Thyroid gland (tissue), 4 donors: ENCODE measurements at regions of chr2 and their contacts with region 1.

Region 1: GRCh38 chr2:120174963-120175581 is 48.1 kb downstream of the TMEM185B start:
- DNase-seq: no peak
- H3K4me3 ChIP-seq: no peak overlapping the region
- H3K27ac ChIP-seq: peak overlapping the region in 2 of 3 donors; percentile 4 to 38
- H3K4me1 ChIP-seq: peaks cover 0 to 5% of the 10 kb centered on the region in 2 donors
- H3K27me3 ChIP-seq: no peaks in the 10 kb centered on the region
- CTCF ChIP-seq: peak in 5 of 6 experiments; percentile 54 to 80 (median 74)
- POLR2A ChIP-seq: no peak

Region 2: DNA sequence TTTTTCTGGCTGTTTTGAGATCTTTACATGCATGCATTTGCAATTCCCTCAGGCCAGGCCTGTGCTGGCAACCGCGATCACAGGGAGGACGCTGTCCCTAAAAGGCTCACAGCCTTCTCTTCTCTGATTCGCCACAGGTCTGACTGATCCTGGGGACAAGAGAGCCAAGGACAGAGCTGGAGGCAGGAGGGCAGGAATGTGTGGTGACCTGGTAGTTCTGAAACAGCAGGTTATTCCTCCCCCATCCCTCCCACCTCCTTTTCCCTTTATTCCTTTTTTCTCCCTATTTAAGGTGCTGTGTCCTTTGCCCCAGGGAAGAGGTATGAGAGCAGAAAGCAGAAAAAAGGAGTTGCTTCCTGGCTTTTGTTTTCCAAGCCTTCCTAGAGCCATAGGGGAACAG is 474.2 kb before region 1 on chr2:
- intact Hi-C with region 1: loop called (anchors 2 kb)
- DNase-seq: no peak
- H3K4me3 ChIP-seq: no peak overlapping the region
- H3K27ac ChIP-seq: peak overlapping the region in 2 of 3 donors; percentile 72 to 79
- H3K4me1 ChIP-seq: peaks cover 34 to 57% of the 10 kb centered on the region in 2 donors
- H3K27me3 ChIP-seq: no peaks in the 10 kb centered on the region
- CTCF ChIP-seq: no peak
- POLR2A ChIP-seq: no peak

Region 3: GRCh38 chr2:119753041-119753929 is 421.8 kb before region 1 on chr2:
- intact Hi-C with region 1: loop called (anchors 5 kb)
- DNase-seq: no peak
- H3K4me3 ChIP-seq: no peak overlapping the region
- H3K27ac ChIP-seq: no peak overlapping the region
- H3K4me1 ChIP-seq: peaks cover 9 to 17% of the 10 kb centered on the region in 2 donors
- H3K27me3 ChIP-seq: no peaks in the 10 kb centered on the region
- CTCF ChIP-seq: peak in 5 of 6 experiments; percentile 21 to 71 (median 61)
- POLR2A ChIP-seq: no peak

Region 4: GRCh38 chr2:120445428-120446136 is 270.5 kb after region 1 on chr2:
- intact Hi-C with region 1: no loop called
- DNase-seq: peak; percentile 74 to 80
- H3K4me3 ChIP-seq: no peak overlapping the region
- H3K27ac ChIP-seq: peak overlapping the region in 2 of 3 donors; percentile 28 to 30
- H3K4me1 ChIP-seq: peaks cover 13 to 21% of the 10 kb centered on the region in 2 donors
- H3K27me3 ChIP-seq: no peaks in the 10 kb centered on the region
- CTCF ChIP-seq: no peak
- POLR2A ChIP-seq: peak in 1 of 2 donors; percentile 31

Region 5: GRCh38 chr2:120992791-120993555 is 817.9 kb after region 1 on chr2:
- intact Hi-C with region 1: no loop called
- DNase-seq: no peak
- H3K4me3 ChIP-seq: no peak overlapping the region
- H3K27ac ChIP-seq: no peak overlapping the region
- H3K4me1 ChIP-seq: no peaks in the 10 kb centered on the region
- H3K27me3 ChIP-seq: no peaks in the 10 kb centered on the region
- CTCF ChIP-seq: no peak
- POLR2A ChIP-seq: no peak